ENCODE measurements at regions of chr5 and their contacts with region 1.

Region 1: GRCh38 chr5:79464695-79465332 is 49.1 kb downstream of the HOMER1 start:
- DNase-seq: peak in 1 of 2 donors; percentile 53
- H3K4me3 ChIP-seq: no peak overlapping the region
- H3K27ac ChIP-seq: no peak overlapping the region
- H3K4me1 ChIP-seq: peaks cover 0 to 9% (median 4%) of the 10 kb centered on the region in 4 donors
- H3K27me3 ChIP-seq: no peaks in the 10 kb centered on the region
- CTCF ChIP-seq: peak in 5 of 7 experiments; percentile 50 to 67 (median 54)
- EP300 ChIP-seq: no peak
- POLR2A ChIP-seq: no peak

Region 2: GRCh38 chr5:79020861-79021561 is 443.8 kb before region 1 on chr5:
- intact Hi-C with region 1: loop called (anchors 5 kb)
- DNase-seq: peak; percentile 60 to 87
- H3K4me3 ChIP-seq: no peak overlapping the region
- H3K27ac ChIP-seq: no peak overlapping the region
- H3K4me1 ChIP-seq: peaks cover 8 to 32% (median 18%) of the 10 kb centered on the region in 4 donors
- H3K27me3 ChIP-seq: no peaks in the 10 kb centered on the region
- CTCF ChIP-seq: peak in 5 of 7 experiments; percentile 53 to 74 (median 72)
- EP300 ChIP-seq: no peak
- POLR2A ChIP-seq: no peak

Measured in stomach (tissue), 19 donors.